IMR-90 (cell line): ENCODE measurements at regions of chr11 and their contacts with region 1.

Region 1: DNA sequence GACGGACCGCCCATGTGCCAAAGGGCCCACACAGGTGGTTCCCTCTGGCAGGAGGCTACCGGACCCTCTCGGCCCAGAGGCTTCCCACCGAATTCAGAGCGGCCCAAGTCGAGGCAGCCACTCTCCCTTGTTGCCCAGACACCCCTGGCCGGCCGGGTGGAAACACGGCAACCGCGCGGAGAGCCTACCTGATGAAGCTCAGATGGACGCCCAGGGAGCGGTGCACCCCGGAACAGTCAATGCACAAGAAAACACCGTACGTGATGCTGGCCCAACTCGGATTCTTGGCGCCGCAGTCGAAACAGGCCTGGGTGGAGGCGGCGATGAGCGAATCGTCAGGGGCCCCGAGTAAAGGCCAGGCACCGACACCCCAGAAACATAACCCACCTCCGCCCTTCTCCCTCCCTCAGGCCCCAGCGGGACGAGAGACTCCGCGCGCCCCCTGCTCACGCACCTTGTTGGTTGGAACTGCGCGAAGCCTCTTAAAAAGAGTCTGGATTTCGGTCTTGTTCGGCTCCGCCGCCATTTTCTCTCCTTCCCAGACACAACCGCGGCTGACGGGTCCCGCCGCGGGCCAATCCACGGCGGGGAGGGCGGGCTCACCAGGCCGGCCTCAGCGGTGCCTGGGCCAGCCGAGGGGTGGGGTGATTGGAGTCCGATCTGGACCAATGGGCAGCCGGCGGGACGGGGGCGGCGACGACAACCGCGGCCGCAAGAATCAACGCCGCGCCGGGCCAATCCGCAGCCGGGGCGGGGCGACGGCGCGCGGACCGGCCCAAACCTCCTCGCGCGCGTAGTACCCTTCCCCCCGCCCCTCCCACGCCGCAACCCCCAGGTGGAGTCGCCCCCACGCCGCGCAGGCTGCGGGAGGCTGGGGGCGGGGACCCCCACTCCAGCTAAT is at the start of gene ARFGAP2:
- DNase-seq: peak; percentile 94
- ATAC-seq: peak; percentile 97
- H3K4me3 ChIP-seq: peak within 1 kb of the TSS; percentile 92
- H3K27ac ChIP-seq: peak within 1 kb of the TSS; percentile 97
- H3K4me1 ChIP-seq: peaks cover 9% of the 10 kb centered on the region
- H3K27me3 ChIP-seq: no peaks in the 10 kb centered on the region
- CTCF ChIP-seq: no peak
- POLR2A ChIP-seq: peak; percentile 72; the same call in 1 of the 2 replicates
- RAD21 ChIP-seq: no peak
- total RNA-seq, gene ARFGAP2: 87.8 and 114 TPM in 2 replicates

Region 2: GRCh38 chr11:47004595-47005033 is 172.0 kb before region 1 on chr11:
- CTCF ChIA-PET with region 1: no interaction called
- POLR2A ChIA-PET with region 1: no interaction called
- dilution Hi-C with region 1: no loop called
- in situ Hi-C with region 1: no loop called
- intact Hi-C with region 1: no loop called
- DNase-seq: peak; percentile 98
- ATAC-seq: peak; percentile 99
- H3K4me3 ChIP-seq: no peak overlapping the region
- H3K27ac ChIP-seq: no peak overlapping the region
- H3K4me1 ChIP-seq: 0 out of 2 replicates have a peak, but pooled peaks cover 5% of the 10 kb centered on the region
- H3K27me3 ChIP-seq: no peaks in the 10 kb centered on the region
- CTCF ChIP-seq: no peak
- POLR2A ChIP-seq: no peak
- RAD21 ChIP-seq: peak; percentile 32; the same call in 1 of the 2 replicates

Region 3: GRCh38 chr11:47233989-47234668 is 57.6 kb after region 1 on chr11:
- CTCF ChIA-PET with region 1: interaction called, 4 read pairs
- POLR2A ChIA-PET with region 1: no interaction called
- dilution Hi-C with region 1: no loop called
- in situ Hi-C with region 1: no loop called
- intact Hi-C with region 1: loop called (anchors 2 kb)
- DNase-seq: peak; percentile 67
- ATAC-seq: peak; percentile 83
- H3K4me3 ChIP-seq: no peak overlapping the region
- H3K27ac ChIP-seq: peak overlapping the region; percentile 51
- H3K4me1 ChIP-seq: peaks cover 14% of the 10 kb centered on the region
- H3K27me3 ChIP-seq: no peaks in the 10 kb centered on the region
- CTCF ChIP-seq: peak; percentile 50
- POLR2A ChIP-seq: no peak
- RAD21 ChIP-seq: peak; percentile 43

Region 4: DNA sequence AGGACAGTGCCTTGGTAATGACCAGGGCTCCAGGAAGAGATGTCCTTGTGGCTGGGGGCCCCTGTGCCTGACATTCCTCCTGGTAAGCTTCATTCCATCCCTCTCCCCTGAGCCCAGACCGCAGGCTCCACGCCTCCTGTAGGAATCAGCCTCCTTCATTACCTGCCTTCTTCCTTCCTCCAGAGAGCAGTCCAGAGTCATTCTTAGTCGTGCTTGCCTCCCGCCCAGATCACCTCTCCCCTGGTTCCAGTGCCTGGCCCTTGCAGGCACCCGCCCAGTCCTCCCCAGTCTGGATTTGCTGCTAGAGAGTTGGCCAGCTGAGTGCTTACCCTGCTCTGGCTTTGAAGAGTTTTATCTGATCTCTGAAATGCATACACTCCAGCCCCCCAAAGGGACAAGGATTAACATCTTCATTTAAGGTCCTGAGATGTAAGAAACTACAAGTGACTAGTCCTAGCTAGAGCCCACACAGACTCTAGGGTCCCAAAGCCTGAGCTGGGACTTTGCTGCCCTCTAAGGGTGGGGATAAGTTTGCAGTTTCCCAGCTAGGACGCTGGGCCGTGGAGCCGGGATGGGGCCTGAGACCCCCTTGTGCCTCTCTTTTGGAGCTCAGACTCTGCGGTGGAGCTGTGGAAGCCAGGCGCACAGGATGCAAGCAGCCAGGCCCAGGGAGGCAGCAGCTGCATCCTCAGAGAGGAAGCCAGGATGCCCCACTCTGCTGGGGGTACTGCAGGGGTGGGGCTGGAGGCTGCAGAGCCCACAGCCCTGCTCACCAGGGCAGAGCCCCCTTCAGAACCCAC is 82.8 kb after region 1 on chr11:
- CTCF ChIA-PET with region 1: interaction called, 5 read pairs
- POLR2A ChIA-PET with region 1: no interaction called
- dilution Hi-C with region 1: no loop called
- in situ Hi-C with region 1: loop called (anchors 5 kb)
- intact Hi-C with region 1: loop called (anchors 1 kb)
- DNase-seq: peak; percentile 30
- ATAC-seq: peak; percentile 55
- H3K4me3 ChIP-seq: no peak overlapping the region
- H3K27ac ChIP-seq: 0 out of 2 replicates have a peak overlapping the region, but pooled peaks have one; percentile 10
- H3K4me1 ChIP-seq: peaks cover 21% of the 10 kb centered on the region
- H3K27me3 ChIP-seq: no peaks in the 10 kb centered on the region
- CTCF ChIP-seq: peak; percentile 60
- POLR2A ChIP-seq: no peak
- RAD21 ChIP-seq: peak; percentile 68

Region 5: GRCh38 chr11:47264521-47264920 is 87.9 kb after region 1 on chr11:
- CTCF ChIA-PET with region 1: interaction called, 4 read pairs
- POLR2A ChIA-PET with region 1: no interaction called
- dilution Hi-C with region 1: no loop called
- in situ Hi-C with region 1: loop called (anchors 5 kb)
- intact Hi-C with region 1: loop called (anchors 1 kb)
- DNase-seq: peak; percentile 82
- ATAC-seq: no peak; the same call in none of the 2 replicates
- H3K4me3 ChIP-seq: no peak overlapping the region
- H3K27ac ChIP-seq: peak overlapping the region; percentile 42; the same call in 1 of the 2 replicates
- H3K4me1 ChIP-seq: peaks cover 19% of the 10 kb centered on the region
- H3K27me3 ChIP-seq: no peaks in the 10 kb centered on the region
- CTCF ChIP-seq: no peak
- POLR2A ChIP-seq: no peak
- RAD21 ChIP-seq: no peak

Region 6: DNA sequence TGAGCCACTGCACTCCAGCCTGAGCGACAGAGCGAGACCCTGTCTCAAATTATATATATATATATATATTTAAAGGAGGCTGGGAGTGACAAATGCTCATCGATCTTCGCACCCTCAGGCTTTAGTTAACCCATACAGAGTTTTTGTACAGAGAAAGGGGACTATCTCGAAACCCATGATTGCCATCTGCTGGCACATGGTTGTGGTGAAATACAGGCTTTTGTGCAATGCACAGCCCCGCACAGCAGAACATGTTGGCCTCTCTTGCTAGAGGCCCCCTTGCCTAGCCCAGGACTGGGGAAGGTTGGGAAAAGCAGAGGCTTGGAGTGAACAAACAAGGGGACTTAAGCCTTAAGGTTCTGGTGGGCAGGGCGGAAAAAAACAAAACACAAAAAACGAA is 172.3 kb after region 1 on chr11:
- CTCF ChIA-PET with region 1: no interaction called
- POLR2A ChIA-PET with region 1: no interaction called
- dilution Hi-C with region 1: no loop called
- in situ Hi-C with region 1: loop called (anchors 5 kb)
- intact Hi-C with region 1: loop called (anchors 1 kb)
- DNase-seq: peak; percentile 22
- ATAC-seq: peak; percentile 75
- H3K4me3 ChIP-seq: no peak overlapping the region
- H3K27ac ChIP-seq: no peak overlapping the region
- H3K4me1 ChIP-seq: no peaks in the 10 kb centered on the region
- H3K27me3 ChIP-seq: peaks cover 28% of the 10 kb centered on the region
- CTCF ChIP-seq: peak; percentile 14; the same call in 1 of the 2 replicates
- POLR2A ChIP-seq: no peak
- RAD21 ChIP-seq: peak; percentile 16; the same call in 1 of the 2 replicates

Region 7: DNA sequence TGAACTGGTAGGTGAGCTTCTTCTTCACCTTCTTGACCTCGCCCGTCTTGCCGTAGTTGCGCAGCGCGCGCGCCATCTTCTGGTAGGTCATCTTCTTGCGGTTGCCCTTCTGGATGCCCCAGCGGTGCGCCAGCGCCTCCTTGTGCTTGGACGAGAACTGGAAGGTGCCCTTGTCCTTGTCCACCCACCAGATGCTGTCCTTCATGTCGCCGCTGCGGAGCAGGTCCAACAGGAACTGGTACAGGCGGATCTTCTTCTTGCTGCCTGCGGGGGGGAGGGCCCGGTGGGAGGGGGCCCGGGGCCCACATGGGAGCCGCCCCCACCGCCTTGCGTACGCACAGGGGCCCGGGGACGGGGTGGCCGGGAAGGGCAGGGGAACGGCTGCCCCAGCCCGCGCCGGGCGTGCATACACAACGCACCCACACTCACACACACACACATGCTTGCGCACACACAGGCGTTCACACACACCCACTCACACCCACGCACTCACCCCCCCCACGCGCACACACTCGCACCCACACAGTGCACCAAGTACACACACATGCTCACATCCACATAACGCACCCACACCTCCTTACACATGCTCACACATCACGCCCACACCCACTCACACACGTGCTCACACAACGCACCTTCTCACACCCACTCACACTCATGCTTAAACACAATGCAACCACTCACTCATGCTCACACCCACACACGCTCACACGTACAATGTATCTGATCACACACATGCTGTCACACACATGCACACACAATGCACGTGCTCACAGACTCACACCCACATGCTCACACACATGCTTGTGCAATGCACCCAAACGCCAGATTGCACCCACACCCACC is 178.9 kb after region 1 on chr11:
- CTCF ChIA-PET with region 1: interaction called, 4 read pairs
- POLR2A ChIA-PET with region 1: no interaction called
- dilution Hi-C with region 1: no loop called
- in situ Hi-C with region 1: no loop called
- intact Hi-C with region 1: loop called (anchors 1 kb)
- DNase-seq: peak; percentile 88
- ATAC-seq: peak; percentile 98
- H3K4me3 ChIP-seq: no peak overlapping the region
- H3K27ac ChIP-seq: no peak overlapping the region
- H3K4me1 ChIP-seq: no peaks in the 10 kb centered on the region
- H3K27me3 ChIP-seq: no peaks in the 10 kb centered on the region; the same call in 1 of the 2 replicates
- CTCF ChIP-seq: peak; percentile 100
- POLR2A ChIP-seq: no peak
- RAD21 ChIP-seq: peak; percentile 98